ENCODE measurements at regions of chr1 and their contacts with region 1.

Region 1: DNA sequence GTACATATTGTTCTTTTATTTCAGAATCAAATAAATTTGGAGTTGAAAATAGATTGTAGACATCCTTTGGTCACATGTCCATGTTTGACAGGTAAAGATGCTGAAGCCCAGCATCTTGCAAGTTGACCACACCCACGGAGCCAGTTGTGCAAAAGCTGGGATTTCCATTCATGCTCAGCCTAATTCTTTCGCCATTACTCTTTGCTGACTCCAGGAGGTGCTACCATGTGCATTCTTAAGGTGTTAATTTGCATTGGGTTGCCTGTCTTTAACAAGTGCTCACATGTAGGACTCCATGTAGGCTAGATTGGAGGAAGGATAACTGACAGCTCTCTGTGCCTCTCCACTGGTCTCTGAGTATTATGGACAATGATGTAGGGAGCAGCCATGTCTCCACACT is 660.7 kb downstream of the LMO4 start:
- DNase-seq: no peak
- H3K4me3 ChIP-seq: no peak overlapping the region
- H3K27ac ChIP-seq: no peak overlapping the region
- H3K4me1 ChIP-seq: no peaks in the 10 kb centered on the region
- H3K27me3 ChIP-seq: no peaks in the 10 kb centered on the region
- CTCF ChIP-seq: peak in 1 of 3 experiments; percentile 45; a peak in 2 of 4 replicates
- EP300 ChIP-seq: no peak
- POLR2A ChIP-seq: no peak
- RAD21 ChIP-seq: peak; percentile 2 to 24; a peak in 1 of 4 replicates

Region 2: DNA sequence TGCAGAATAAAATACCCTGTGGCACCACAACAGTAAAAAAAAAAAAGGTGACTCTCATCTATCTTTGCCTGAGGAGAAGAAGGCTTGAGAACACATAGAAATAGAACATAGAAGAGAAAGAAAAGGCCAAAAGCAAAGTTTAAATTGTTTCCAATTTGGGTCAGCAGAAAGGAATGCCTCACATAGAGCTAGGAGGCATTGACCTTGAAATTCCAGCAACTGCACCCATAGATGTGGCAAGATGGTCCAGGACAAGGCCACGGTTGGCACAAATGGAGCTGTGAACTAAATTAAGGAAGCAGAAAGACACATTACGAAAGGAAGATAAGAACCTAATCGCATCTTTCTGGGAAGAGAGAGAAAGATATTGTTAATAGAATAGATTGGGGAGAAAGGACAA is 72.4 kb before region 1 on chr1:
- CTCF ChIA-PET with region 1: no interaction called
- POLR2A ChIA-PET with region 1: no interaction called
- DNase-seq: no peak
- H3K4me3 ChIP-seq: no peak overlapping the region
- H3K27ac ChIP-seq: no peak overlapping the region
- H3K4me1 ChIP-seq: no peaks in the 10 kb centered on the region
- H3K27me3 ChIP-seq: no peaks in the 10 kb centered on the region
- CTCF ChIP-seq: no peak
- EP300 ChIP-seq: no peak
- POLR2A ChIP-seq: no peak
- RAD21 ChIP-seq: no peak

Region 3: DNA sequence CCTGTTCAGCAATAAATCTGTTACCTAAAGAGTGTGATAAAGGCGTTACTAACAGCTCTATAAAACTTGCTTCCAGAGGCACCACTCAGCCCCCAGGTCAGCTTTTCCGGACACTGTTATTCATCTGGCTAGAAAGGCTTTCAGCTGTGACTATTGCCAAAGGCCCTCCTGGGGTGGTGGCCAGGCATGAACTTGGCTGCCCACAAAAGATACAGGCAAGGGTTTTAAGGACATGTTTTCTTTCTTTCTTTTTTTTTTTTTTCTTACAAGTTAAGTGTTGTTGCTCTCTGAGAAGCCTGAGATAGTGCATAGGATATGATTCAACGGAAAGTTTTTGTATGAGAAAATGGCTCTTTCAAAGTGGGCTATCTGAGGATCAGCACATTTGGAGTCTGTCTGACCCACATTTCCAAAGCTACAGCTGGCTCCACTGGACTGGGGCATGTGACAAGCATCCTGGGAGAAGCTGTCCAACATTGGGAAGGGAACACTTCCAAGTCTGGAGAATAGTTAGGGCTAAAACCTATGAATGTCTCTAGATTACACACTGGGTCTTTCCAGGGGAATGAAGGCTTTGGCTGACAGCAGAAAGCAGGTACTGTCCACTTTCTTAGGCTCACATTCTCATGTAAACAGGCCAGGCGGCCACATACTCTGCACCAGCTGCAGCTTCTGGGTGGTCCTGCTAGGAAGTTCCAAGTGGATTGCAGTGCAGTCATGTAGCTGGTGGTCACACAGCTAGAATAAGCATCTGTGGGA is 21.0 kb before region 1 on chr1:
- CTCF ChIA-PET with region 1: interaction called, 15 read pairs
- POLR2A ChIA-PET with region 1: no interaction called
- DNase-seq: no peak
- H3K4me3 ChIP-seq: 0 out of 8 replicates have a peak overlapping the region, but pooled peaks of 1 of the 4 experiments have one; percentile 3
- H3K27ac ChIP-seq: no peak overlapping the region
- H3K4me1 ChIP-seq: peaks cover 4 to 9% (median 7%) of the 10 kb centered on the region in 4 experiments; a peak in 6 of 7 replicates
- H3K27me3 ChIP-seq: no peaks in the 10 kb centered on the region
- CTCF ChIP-seq: no peak
- EP300 ChIP-seq: no peak
- POLR2A ChIP-seq: no peak
- RAD21 ChIP-seq: no peak

Region 4: DNA sequence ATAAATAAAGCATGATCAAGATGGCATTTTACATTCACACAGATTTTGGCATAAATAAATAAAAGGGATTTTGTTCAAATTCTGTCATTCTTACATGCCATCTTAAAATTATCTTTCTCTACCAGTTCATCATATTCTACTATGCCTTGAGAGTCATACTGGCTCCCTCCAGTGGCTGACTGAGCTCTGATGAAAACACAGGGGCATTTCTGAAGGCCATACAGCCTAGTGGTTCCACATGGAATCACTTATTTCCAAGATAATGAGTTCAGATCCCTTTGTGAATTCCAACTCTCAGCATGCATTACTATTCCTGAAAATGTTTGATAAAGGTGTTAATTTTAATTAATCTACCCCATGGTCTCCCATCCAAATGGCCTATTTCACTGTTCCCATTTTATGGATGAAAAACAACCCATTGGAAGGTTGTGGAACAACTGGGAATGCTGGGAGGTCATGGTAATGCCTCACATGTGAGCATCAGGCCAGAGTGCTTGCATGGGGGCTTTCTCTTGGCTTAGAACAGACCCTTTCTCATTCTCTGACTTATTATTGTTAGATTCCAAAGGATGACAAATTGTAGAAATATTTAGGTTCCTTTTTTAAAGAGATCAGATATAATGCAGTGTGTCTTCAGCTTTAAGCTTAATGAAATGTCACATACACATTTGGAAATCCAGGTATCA is 72.3 kb after region 1 on chr1:
- CTCF ChIA-PET with region 1: interaction called, 10 read pairs
- POLR2A ChIA-PET with region 1: no interaction called
- DNase-seq: peak in 1 of 2 experiments; percentile 21
- H3K4me3 ChIP-seq: no peak overlapping the region
- H3K27ac ChIP-seq: no peak overlapping the region
- H3K4me1 ChIP-seq: no peaks in the 10 kb centered on the region
- H3K27me3 ChIP-seq: no peaks in the 10 kb centered on the region
- CTCF ChIP-seq: peak in 2 of 3 experiments; percentile 91 to 99; a peak in 3 of 4 replicates
- EP300 ChIP-seq: no peak
- POLR2A ChIP-seq: no peak
- RAD21 ChIP-seq: peak; percentile 84 to 86

Region 5: GRCh38 chr1:88079036-88079435 is 89.7 kb after region 1 on chr1:
- CTCF ChIA-PET with region 1: no interaction called
- POLR2A ChIA-PET with region 1: no interaction called
- DNase-seq: no peak
- H3K4me3 ChIP-seq: no peak overlapping the region
- H3K27ac ChIP-seq: no peak overlapping the region
- H3K4me1 ChIP-seq: no peaks in the 10 kb centered on the region
- H3K27me3 ChIP-seq: no peaks in the 10 kb centered on the region
- CTCF ChIP-seq: peak; percentile 59 to 79 (median 65)
- EP300 ChIP-seq: no peak
- POLR2A ChIP-seq: no peak
- RAD21 ChIP-seq: peak; percentile 66 to 71